ENCODE measurements at regions of chr11 and their contacts with region 1.

Region 1: GRCh38 chr11:107549253-107549953 is 16.1 kb downstream of the ALKBH8 start:
- DNase-seq: peak; percentile 85
- ATAC-seq: no peak
- H3K4me3 ChIP-seq: no peak overlapping the region
- H3K27ac ChIP-seq: no peak overlapping the region
- H3K4me1 ChIP-seq: peaks cover 20% of the 10 kb centered on the region
- H3K27me3 ChIP-seq: no peaks in the 10 kb centered on the region
- CTCF ChIP-seq: peak; percentile 99

Region 2: DNA sequence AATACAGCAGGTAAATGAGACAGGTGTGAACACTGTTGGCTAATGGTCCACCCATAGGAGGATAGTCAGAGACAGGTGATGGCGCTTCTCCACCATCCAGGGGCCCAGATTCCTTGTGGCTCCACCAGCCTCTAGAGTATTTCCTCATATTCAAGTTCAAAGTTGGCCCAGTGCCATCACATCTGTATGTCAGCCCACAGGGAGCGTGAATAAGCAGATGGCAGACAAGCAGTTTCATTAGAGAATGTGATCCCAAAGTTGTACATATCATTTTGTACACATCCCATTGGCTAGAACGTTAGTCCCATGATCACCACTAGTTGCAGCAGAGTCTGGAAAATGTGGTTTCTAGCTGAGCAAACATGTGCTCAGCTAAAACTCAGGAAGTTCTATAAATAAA is 80.8 kb before region 1 on chr11:
- CTCF ChIA-PET with region 1: no interaction called
- POLR2A ChIA-PET with region 1: no interaction called
- intact Hi-C with region 1: loop called (anchors 5 kb)
- DNase-seq: no peak
- ATAC-seq: peak; percentile 31
- H3K4me3 ChIP-seq: no peak overlapping the region
- H3K27ac ChIP-seq: no peak overlapping the region
- H3K4me1 ChIP-seq: no peaks in the 10 kb centered on the region
- H3K27me3 ChIP-seq: peaks cover 30% of the 10 kb centered on the region
- CTCF ChIP-seq: no peak

Region 3: DNA sequence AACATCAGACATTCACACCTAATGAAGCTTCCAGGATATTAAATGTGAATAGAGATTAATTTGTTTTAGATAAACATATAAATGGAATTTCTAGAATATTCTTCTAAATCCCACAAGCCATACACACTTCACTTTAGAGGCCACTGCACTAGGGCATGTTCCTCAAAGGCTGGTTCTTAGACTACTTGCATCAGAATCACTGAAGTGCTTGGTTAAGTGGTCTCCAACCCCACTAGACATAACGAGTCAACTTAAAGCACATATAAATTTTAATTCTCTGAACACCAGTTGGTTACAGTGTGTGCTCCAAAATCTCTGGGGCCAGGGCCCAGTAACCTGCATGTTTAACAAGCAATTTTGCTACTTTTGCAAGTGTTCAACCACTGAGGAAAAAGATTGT is 24.0 kb after region 1 on chr11:
- CTCF ChIA-PET with region 1: no interaction called
- POLR2A ChIA-PET with region 1: no interaction called
- intact Hi-C with region 1: loop called (anchors 1 kb)
- DNase-seq: no peak
- ATAC-seq: no peak
- H3K4me3 ChIP-seq: no peak overlapping the region
- H3K27ac ChIP-seq: no peak overlapping the region
- H3K4me1 ChIP-seq: no peaks in the 10 kb centered on the region
- H3K27me3 ChIP-seq: peaks cover 5% of the 10 kb centered on the region; the same call in 1 of the 2 replicates
- CTCF ChIP-seq: no peak

Region 4: DNA sequence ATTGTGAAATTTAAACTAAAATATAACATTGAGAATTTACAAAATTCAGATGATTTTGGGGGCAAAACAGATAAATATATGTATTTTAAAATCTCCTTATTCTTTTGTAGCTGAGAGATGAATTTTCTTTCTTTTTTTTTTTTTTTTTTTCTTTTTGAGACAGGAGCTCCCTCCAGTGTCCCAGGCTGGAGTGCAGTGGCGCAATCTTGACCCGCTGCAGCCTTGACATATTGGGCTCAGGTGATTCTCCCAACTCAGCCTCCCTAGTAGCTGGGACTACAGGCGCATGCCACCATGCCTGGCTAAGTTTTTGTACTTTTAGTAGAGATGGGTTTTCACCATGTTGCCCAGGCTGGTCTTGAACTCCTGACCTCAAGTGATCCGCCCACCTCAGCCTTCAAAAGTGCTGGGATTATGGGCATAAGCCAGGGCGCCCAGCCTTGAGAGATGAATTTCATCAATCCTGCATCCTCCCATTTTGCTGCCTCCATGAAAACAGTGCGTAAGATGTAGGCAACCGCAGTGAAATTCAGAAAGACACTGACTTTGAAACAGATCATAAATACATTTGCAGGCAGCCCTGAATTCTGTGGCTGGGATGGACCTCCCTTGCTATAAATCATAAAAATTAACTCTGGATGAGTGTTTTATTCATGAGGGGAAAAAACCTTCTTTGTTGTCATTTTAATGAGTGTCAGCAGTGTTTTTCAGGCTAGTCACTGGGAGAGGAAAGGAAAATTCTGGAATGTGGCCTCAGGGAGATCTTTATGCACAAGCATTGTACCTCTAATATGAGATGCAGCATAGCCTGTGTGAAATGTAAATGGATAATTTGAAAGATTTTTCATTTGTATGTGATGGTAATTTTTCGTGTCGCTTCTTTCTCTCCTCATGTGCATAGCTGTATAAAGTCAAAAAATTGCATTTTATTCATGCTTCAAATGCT is 55.9 kb after region 1 on chr11:
- CTCF ChIA-PET with region 1: interaction called, 10 read pairs
- POLR2A ChIA-PET with region 1: interaction called, 3 read pairs
- intact Hi-C with region 1: no loop called
- DNase-seq: peak; percentile 39
- ATAC-seq: peak; percentile 35; the same call in 1 of the 2 replicates
- H3K4me3 ChIP-seq: no peak overlapping the region
- H3K27ac ChIP-seq: no peak overlapping the region
- H3K4me1 ChIP-seq: no peaks in the 10 kb centered on the region
- H3K27me3 ChIP-seq: peaks cover 88% of the 10 kb centered on the region
- CTCF ChIP-seq: peak; percentile 55; the same call in 1 of the 2 replicates

Region 5: DNA sequence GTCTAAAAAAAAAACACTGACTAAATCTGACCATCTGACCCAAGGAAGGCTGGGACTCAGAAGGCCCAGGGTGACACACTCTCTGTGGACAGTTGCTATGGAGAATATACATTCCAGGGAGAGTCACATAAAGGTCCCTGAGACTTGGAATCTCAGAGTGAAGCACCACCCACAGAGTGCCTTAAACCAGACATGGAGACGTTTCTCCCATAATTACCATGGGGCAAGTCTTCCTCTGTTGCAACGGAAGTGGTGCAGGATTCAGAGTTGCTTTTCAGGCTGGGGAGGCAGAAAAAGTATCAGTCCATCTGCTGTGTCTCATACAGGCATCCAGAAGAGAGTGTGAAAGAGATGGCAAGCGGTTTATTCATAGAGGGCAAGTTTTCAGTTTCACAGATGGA is 221.1 kb after region 1 on chr11:
- CTCF ChIA-PET with region 1: interaction called, 5 read pairs
- POLR2A ChIA-PET with region 1: no interaction called
- intact Hi-C with region 1: loop called (anchors 5 kb)
- DNase-seq: peak; percentile 51
- ATAC-seq: peak; percentile 9; the same call in 1 of the 2 replicates
- H3K4me3 ChIP-seq: no peak overlapping the region
- H3K27ac ChIP-seq: no peak overlapping the region
- H3K4me1 ChIP-seq: peaks cover 15% of the 10 kb centered on the region
- H3K27me3 ChIP-seq: peaks cover 6% of the 10 kb centered on the region
- CTCF ChIP-seq: no peak

Measured in PC-3 (cell line).